OCI-LY7 (cell line): ENCODE measurements at regions of chr17 and their contacts with region 1.

Region 1: DNA sequence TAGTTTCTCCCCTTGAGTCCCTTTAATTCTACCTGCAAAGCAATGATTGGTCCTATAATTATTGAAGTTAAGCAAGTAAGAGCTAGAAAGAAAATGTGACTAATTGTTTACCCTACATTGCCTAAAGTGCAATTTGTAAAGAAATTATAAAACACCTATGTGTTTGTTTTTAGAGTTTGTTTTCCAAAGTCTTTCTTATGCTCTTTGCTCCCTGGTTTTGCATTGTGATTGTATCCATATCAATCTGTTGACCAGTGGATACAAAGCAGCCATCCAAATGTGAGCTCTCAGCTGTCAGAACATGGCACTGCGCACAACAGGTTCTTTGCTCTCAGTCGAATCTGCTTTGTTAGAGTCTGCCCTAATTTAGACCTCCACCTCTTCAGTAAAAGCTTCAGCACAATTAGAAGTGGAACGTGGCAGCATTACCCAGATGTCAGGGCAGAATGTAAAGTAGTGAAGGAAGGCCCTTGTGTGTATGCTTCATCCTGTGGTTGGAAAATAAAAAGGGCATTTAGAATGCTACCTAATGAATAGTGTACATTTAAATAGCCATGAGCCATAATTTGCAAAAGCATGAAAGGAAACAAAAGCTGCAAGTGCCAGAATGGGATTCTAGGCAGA is 70.5 kb downstream of the AATF start:
- DNase-seq: no peak
- H3K4me3 ChIP-seq: no peak overlapping the region
- H3K27ac ChIP-seq: no peak overlapping the region
- H3K4me1 ChIP-seq: no peaks in the 10 kb centered on the region
- CTCF ChIP-seq: no peak

Region 2: GRCh38 chr17:36983618-36984017 is 35.6 kb before region 1 on chr17:
- CTCF ChIA-PET with region 1: no interaction called
- POLR2A ChIA-PET with region 1: no interaction called
- intact Hi-C with region 1: no loop called
- DNase-seq: no peak
- H3K4me3 ChIP-seq: no peak overlapping the region
- H3K27ac ChIP-seq: no peak overlapping the region
- H3K4me1 ChIP-seq: peaks cover 4% of the 10 kb centered on the region
- CTCF ChIP-seq: no peak

Region 3: DNA sequence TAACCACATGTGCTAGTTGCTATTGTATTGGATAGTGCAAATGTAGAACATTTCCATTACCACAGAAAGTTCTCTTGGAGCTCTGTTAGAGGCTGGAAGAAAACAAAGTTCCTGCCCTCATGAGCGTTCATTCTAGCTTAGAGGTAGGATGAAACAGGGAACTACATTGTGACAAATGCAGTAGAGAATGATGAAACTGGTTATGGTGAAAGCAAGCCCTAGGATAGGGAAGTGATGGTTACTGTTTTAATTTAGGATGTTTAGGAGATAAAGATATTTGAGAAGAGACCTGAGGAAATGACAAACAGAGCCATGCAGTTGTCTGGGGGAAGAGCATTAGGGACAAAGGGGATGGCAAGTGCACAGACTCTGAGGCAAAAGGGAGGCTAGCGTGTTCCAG is 19.8 kb before region 1 on chr17:
- CTCF ChIA-PET with region 1: no interaction called
- POLR2A ChIA-PET with region 1: interaction called, 15 read pairs
- intact Hi-C with region 1: no loop called
- DNase-seq: no peak
- H3K4me3 ChIP-seq: no peak overlapping the region
- H3K27ac ChIP-seq: no peak overlapping the region
- H3K4me1 ChIP-seq: no peaks in the 10 kb centered on the region
- CTCF ChIP-seq: no peak

Region 4: DNA sequence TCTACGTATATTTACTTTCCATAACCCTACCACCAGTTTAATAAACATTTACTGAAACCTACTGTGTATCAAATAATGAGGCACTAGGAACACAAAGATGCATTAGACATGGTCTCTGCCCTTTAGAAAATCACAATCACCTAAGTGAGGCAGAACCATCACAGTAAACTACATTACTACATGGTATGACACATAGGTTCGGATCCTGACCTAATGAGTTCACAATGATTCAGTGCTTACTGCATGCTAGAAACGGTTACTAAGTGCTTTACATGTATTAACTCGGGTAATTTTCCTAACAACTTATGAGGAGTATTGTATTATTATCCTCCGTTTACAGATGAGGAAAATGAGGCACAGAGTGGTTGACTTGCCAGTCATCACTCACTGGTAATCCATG is 595.2 kb after region 1 on chr17:
- CTCF ChIA-PET with region 1: no interaction called
- POLR2A ChIA-PET with region 1: no interaction called
- intact Hi-C with region 1: no loop called
- DNase-seq: no peak
- H3K4me3 ChIP-seq: no peak overlapping the region
- H3K27ac ChIP-seq: no peak overlapping the region
- H3K4me1 ChIP-seq: peaks cover 9% of the 10 kb centered on the region
- CTCF ChIP-seq: no peak